HEK293 (cell line): ENCODE measurements at regions of chr11 and their contacts with region 1.

Region 1: DNA sequence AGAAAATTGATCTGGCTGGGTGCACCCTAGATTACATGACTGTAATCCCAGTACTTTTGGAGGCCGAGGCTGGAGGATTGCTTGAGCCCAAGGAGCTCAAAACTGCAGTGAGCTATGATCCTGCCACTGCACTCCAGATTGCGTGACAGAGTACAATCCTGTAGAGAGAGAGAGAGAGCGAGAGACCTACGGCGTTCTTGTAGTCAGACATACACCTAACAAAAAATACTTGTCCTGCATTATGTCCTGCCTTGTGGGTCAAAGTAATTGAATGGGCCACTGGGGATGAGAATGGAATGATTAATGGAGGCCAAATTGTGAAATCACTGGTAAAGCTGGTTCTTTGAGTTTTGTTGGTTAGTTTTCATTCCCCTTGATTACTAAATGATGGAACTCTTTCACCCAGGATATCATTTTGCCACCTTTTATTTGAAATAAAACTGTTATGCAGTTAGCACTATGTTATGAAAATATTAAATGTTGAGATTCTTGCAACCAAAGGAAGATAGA is 18.6 kb downstream of the GAS2 start:
- H3K4me3 ChIP-seq: no peak overlapping the region
- H3K27ac ChIP-seq: no peak overlapping the region
- H3K4me1 ChIP-seq: no peaks in the 10 kb centered on the region
- CTCF ChIP-seq: no peak

Region 2: GRCh38 chr11:22479208-22479607 is 205.8 kb before region 1 on chr11:
- CTCF ChIA-PET with region 1: no interaction called
- POLR2A ChIA-PET with region 1: no interaction called
- H3K4me3 ChIP-seq: no peak overlapping the region
- H3K27ac ChIP-seq: no peak overlapping the region
- H3K4me1 ChIP-seq: no peaks in the 10 kb centered on the region
- CTCF ChIP-seq: no peak

Region 3: DNA sequence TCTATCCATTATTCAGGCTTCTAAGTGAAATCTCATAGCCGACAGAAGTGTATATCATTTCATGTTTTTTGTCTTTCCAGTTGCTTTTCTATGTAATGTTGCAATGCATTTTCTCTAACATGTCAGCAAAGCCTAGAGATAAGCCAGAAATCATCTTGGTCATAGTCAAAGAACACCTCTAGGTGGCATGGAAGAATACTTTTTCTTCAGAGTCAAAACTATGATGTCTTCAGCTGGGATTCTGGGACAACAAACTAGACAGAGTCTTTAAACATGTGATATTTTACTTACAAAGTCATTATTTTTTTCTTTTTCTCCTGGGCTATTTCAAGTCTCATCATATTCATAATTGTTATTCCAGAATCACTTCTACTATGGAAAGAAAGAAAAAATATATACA is 14.2 kb before region 1 on chr11:
- CTCF ChIA-PET with region 1: interaction called, 10 read pairs
- POLR2A ChIA-PET with region 1: no interaction called
- H3K4me3 ChIP-seq: no peak overlapping the region
- H3K27ac ChIP-seq: no peak overlapping the region
- H3K4me1 ChIP-seq: no peaks in the 10 kb centered on the region
- CTCF ChIP-seq: no peak